Breast epithelium (tissue), 4 donors: ENCODE measurements at regions of chr2 and their contacts with region 1.

Region 1: GRCh38 chr2:48295421-48295820 is 234.5 kb upstream of the STON1 start:
- DNase-seq: no peak
- H3K4me3 ChIP-seq: no peak overlapping the region
- H3K27ac ChIP-seq: no peak overlapping the region
- H3K4me1 ChIP-seq: no peaks in the 10 kb centered on the region
- H3K27me3 ChIP-seq: no peaks in the 10 kb centered on the region
- CTCF ChIP-seq: no peak
- POLR2A ChIP-seq: no peak

Region 2: DNA sequence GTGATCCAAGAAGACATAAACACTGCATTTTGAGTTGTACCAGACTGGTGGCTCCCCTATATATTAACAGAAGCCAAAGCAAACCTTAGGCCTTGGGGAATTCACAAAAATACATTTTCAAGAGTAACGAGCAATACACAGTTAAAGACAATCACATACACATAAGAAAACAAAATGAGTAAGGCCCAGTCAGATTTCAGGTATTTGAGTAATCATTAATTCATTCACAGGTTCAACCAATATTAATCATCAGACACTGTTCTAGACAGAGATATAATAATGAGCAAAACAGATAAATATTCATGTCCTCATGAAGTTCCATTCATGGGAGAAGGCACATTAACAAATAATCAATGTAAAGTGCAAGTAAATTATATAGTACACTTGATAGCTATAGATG is 1150.0 kb before region 1 on chr2:
- intact Hi-C with region 1: no loop called
- DNase-seq: no peak
- H3K4me3 ChIP-seq: no peak overlapping the region
- H3K27ac ChIP-seq: no peak overlapping the region
- H3K4me1 ChIP-seq: no peaks in the 10 kb centered on the region
- H3K27me3 ChIP-seq: no peaks in the 10 kb centered on the region
- CTCF ChIP-seq: no peak
- POLR2A ChIP-seq: no peak

Region 3: DNA sequence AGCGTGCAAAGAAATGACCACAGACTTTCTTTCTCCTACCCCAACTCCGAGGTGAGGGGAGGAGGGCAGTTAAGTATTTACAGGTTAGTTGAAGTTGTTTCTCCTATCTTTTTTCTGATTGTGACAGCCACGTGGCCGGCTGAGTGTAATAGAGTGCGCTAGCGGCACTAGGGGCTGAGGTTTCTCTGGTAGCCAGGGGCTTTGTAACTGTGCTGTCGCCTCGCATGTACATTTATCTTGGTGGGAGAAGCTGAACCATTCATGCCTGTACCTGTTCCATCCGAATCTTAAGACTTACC is 20.4 kb after region 1 on chr2:
- intact Hi-C with region 1: no loop called
- DNase-seq: no peak
- H3K4me3 ChIP-seq: peak overlapping the region; percentile 79 to 92 (median 91)
- H3K27ac ChIP-seq: peak overlapping the region; percentile 92 to 93
- H3K4me1 ChIP-seq: no peaks in the 10 kb centered on the region
- H3K27me3 ChIP-seq: no peaks in the 10 kb centered on the region
- CTCF ChIP-seq: no peak
- POLR2A ChIP-seq: no peak

Region 4: GRCh38 chr2:48334180-48334579 is 38.8 kb after region 1 on chr2:
- intact Hi-C with region 1: loop called (anchors 2 kb)
- DNase-seq: no peak
- H3K4me3 ChIP-seq: no peak overlapping the region
- H3K27ac ChIP-seq: no peak overlapping the region
- H3K4me1 ChIP-seq: no peaks in the 10 kb centered on the region
- H3K27me3 ChIP-seq: no peaks in the 10 kb centered on the region
- CTCF ChIP-seq: no peak
- POLR2A ChIP-seq: no peak